Activated B cell treated with CpG ODN at 0.5 μM for 24 hours (primary cell): ENCODE measurements at regions of chr2 and their contacts with region 1.

Region 1: DNA sequence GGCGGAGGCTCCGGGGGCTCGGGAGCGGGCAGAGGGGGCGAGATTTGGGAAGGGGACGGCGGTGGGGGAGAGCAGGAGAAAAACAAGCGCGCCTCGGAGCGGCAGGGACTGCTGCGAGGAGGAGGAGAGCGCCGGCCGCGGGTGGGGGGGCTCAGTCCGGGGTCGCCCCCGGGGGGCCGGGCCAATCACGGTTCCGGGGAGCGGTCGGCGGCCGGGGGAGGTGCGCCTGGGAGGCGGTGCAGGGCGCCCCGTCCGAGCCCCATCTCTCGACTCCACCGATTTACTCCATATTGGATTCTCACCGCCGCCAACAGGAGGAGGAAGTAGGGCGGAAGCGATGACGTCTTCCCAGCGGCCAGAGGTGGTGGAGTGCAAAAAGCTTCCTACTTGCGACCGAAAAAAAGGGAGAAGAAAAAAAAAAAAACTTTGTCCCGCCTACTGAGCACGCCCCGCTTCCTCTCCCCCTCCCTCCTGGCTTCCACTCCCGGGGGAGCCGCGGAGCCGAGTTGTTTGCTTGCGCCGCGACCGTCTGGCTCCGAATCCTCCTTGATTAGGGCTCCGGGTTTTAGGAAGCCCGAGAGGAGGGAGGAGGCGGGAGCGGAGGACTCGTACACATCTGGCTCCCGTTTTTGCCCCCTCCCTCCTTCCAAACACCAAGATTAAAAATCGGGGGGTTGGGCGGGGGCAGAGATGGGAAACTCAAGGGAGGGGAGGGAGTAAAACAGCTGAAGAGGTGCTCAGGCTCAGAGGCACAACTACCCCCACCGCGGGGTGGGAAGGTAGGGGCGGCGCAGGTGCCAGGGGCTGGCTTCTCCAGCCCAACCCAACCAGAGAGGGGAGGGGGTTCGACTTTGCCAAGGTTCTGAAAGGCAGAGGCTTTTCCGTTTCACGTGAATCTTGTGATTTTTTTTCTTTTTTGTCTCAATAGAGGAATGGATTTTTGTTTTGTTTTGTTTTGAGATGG is at the start of gene SPRED2:
- DNase-seq: peak; percentile 62
- ATAC-seq: peak; percentile 30
- H3K4me3 Mint-ChIP-seq: peak within 1 kb of the TSS; percentile 90
- H3K27ac Mint-ChIP-seq: peak within 1 kb of the TSS; percentile 69
- H3K4me1 Mint-ChIP-seq: peaks cover 23% of the 10 kb centered on the region
- H3K27me3 Mint-ChIP-seq: peaks cover 19% of the 10 kb centered on the region
- CTCF ChIP-seq: no peak
- total RNA-seq, gene SPRED2: 2.5 and 3.1 TPM in 2 replicates

Region 2: GRCh38 chr2:65056215-65057053 is 376.1 kb before region 1 on chr2 and contains the start of gene CEP68:
- CTCF ChIA-PET with region 1: no interaction called
- POLR2A ChIA-PET with region 1: no interaction called
- intact Hi-C with region 1: loop called (anchors 2 kb)
- DNase-seq: peak; percentile 95
- ATAC-seq: peak; percentile 91
- H3K4me3 Mint-ChIP-seq: peak within 1 kb of the TSS; percentile 97
- H3K27ac Mint-ChIP-seq: peak within 1 kb of the TSS; percentile 95
- H3K4me1 Mint-ChIP-seq: peaks cover 75% of the 10 kb centered on the region
- H3K27me3 Mint-ChIP-seq: no peaks in the 10 kb centered on the region
- CTCF ChIP-seq: no peak
- total RNA-seq, gene CEP68: 16.6 and 17.9 TPM in 2 replicates

Region 3: DNA sequence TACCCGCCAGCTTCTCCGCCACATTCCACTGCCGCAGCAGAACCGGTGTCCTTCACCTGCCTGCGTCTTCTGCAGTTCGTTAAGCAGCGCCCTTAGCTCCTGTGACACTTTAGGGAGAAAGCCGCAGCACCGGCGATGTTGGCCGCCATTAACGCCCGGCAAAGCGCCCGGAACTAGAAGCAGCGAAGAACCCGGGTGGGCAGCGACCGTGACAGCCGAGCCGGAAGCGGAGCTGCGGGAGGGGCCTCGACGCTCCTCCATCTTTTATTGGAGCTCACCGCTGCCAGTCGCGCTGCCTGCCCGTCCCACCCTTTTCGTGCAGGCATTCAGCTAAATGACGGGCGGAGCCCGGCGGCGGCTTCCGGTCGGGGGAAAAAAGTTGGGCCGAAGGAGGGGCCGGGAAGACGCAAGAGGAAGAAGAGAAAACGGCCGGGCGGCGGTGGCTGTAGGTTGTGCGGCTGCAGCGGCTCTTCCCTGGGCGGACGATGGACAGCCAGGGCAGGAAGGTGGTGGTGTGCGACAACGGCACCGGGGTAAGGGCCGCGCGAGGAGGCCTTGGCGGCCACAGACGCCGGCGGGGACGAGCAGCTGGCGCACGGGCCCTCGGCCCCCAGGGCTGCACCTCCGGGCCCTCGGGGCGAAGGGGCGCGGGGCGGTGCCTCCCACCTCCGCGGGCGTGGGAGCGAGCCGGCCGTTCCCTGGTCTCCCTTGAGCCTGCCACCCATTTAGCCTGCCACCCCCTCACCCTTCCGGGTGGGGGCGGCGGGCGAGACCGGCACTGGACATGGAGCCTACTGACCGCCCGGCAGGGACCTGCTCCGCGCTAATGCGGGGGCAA is 204.9 kb before region 1 on chr2 and contains the start of gene ACTR2:
- CTCF ChIA-PET with region 1: no interaction called
- POLR2A ChIA-PET with region 1: no interaction called
- intact Hi-C with region 1: loop called (anchors 2 kb)
- DNase-seq: peak; percentile 88
- ATAC-seq: peak; percentile 90
- H3K4me3 Mint-ChIP-seq: peak within 1 kb of the TSS; percentile 99
- H3K27ac Mint-ChIP-seq: peak within 1 kb of the TSS; percentile 100
- H3K4me1 Mint-ChIP-seq: peaks cover 45% of the 10 kb centered on the region
- H3K27me3 Mint-ChIP-seq: no peaks in the 10 kb centered on the region
- CTCF ChIP-seq: no peak
- total RNA-seq, gene ACTR2: 484 and 493 TPM in 2 replicates

Region 4: DNA sequence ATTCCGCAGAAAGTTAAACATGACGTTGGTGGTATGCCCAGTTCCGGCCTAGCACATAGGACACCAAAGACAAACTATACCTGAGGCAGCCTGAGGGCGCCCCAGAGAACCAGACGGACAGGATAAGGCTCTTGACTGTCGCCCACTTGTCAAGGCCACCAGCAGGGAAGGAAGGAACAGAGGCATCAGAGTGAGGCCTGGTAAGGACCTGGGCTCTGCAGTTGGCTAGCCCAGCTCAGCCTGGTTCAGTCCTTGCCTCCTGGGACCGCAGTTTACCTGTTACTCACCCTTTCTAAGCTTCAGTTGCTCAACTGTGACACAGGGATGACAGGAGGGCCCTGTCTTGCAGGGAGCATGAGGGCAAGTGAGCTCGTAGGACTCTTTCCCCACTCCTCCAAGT is 122.8 kb before region 1 on chr2:
- CTCF ChIA-PET with region 1: no interaction called
- POLR2A ChIA-PET with region 1: no interaction called
- intact Hi-C with region 1: no loop called
- DNase-seq: no peak
- ATAC-seq: no peak
- H3K4me3 Mint-ChIP-seq: no peak overlapping the region
- H3K27ac Mint-ChIP-seq: no peak overlapping the region
- H3K4me1 Mint-ChIP-seq: no peaks in the 10 kb centered on the region
- H3K27me3 Mint-ChIP-seq: peaks cover 7% of the 10 kb centered on the region
- CTCF ChIP-seq: no peak

Region 5: DNA sequence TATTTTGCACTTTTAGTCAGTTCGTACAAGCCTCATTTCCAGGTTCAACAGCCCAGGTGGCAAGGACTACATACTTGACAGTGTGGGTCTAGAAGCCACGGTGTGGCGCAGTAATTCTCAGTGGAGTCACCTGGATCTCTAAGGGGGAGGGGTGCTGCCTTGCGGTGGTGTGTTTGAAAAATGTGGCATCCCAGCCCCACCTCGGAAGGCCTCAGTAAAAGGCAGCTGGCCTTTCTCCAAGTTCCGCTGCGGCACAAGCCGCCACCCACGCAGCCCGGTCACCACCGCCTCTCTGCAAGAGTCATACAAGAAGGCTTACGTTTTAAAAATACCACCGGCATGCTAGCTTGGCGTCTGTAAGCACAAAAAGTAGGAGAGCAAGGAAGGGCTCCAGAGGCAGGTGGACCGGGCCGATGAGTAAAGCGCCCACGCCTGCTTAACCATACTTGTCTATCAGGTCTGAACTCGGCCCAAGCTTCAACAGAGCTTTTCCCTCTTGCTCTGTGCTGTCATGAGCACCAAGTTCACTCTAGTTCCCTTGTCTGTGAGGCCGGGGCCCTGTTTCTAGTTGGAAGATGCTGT is 49.6 kb before region 1 on chr2:
- CTCF ChIA-PET with region 1: interaction called, 3 read pairs
- POLR2A ChIA-PET with region 1: interaction called, 4 read pairs
- intact Hi-C with region 1: loop called (anchors 1 kb)
- DNase-seq: peak; percentile 40
- ATAC-seq: peak; percentile 78
- H3K4me3 Mint-ChIP-seq: peak overlapping the region; percentile 61
- H3K27ac Mint-ChIP-seq: peak overlapping the region; percentile 72
- H3K4me1 Mint-ChIP-seq: peaks cover 41% of the 10 kb centered on the region
- H3K27me3 Mint-ChIP-seq: peaks cover 5% of the 10 kb centered on the region
- CTCF ChIP-seq: no peak

Region 6: GRCh38 chr2:65420712-65421431 is 11.6 kb before region 1 on chr2:
- CTCF ChIA-PET with region 1: no interaction called
- POLR2A ChIA-PET with region 1: interaction called, 9 read pairs
- intact Hi-C with region 1: loop called (anchors 1 kb)
- DNase-seq: no peak
- ATAC-seq: peak; percentile 87
- H3K4me3 Mint-ChIP-seq: peak overlapping the region; percentile 50
- H3K27ac Mint-ChIP-seq: peak overlapping the region; percentile 6
- H3K4me1 Mint-ChIP-seq: peaks cover 17% of the 10 kb centered on the region
- H3K27me3 Mint-ChIP-seq: peaks cover 36% of the 10 kb centered on the region
- CTCF ChIP-seq: no peak

Region 7: GRCh38 chr2:65605743-65606058 is 173.2 kb after region 1 on chr2:
- CTCF ChIA-PET with region 1: no interaction called
- POLR2A ChIA-PET with region 1: no interaction called
- intact Hi-C with region 1: loop called (anchors 1 kb)
- DNase-seq: no peak
- ATAC-seq: no peak
- H3K4me3 Mint-ChIP-seq: peak overlapping the region; percentile 75
- H3K27ac Mint-ChIP-seq: peak overlapping the region; percentile 94
- H3K4me1 Mint-ChIP-seq: peaks cover 82% of the 10 kb centered on the region
- H3K27me3 Mint-ChIP-seq: no peaks in the 10 kb centered on the region
- CTCF ChIP-seq: no peak

Region 8: DNA sequence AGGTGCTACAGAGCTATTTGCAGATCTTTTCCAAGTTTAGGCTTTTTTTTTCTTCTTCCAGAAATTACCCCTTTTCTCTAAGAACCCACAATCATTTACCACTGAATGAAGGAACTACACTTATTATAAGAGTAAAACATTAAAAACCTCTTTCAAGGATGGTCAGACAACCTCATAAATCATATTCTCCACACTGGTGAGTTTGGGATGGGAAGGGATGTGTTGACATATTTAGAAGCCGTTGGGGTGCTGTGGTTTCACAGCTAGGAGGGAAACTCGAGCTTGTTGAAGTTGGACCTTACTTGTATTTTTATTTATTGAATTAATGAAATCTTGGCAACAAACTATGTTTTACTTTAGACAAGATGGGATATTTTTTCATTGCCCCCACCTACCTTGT is 713.0 kb after region 1 on chr2:
- CTCF ChIA-PET with region 1: no interaction called
- POLR2A ChIA-PET with region 1: no interaction called
- intact Hi-C with region 1: no loop called
- DNase-seq: no peak
- ATAC-seq: no peak
- H3K4me3 Mint-ChIP-seq: no peak overlapping the region
- H3K27ac Mint-ChIP-seq: no peak overlapping the region
- H3K4me1 Mint-ChIP-seq: no peaks in the 10 kb centered on the region
- H3K27me3 Mint-ChIP-seq: no peaks in the 10 kb centered on the region
- CTCF ChIP-seq: no peak